OCI-LY7 (cell line): ENCODE measurements at regions of chr11 and their contacts with region 1.

Region 1: DNA sequence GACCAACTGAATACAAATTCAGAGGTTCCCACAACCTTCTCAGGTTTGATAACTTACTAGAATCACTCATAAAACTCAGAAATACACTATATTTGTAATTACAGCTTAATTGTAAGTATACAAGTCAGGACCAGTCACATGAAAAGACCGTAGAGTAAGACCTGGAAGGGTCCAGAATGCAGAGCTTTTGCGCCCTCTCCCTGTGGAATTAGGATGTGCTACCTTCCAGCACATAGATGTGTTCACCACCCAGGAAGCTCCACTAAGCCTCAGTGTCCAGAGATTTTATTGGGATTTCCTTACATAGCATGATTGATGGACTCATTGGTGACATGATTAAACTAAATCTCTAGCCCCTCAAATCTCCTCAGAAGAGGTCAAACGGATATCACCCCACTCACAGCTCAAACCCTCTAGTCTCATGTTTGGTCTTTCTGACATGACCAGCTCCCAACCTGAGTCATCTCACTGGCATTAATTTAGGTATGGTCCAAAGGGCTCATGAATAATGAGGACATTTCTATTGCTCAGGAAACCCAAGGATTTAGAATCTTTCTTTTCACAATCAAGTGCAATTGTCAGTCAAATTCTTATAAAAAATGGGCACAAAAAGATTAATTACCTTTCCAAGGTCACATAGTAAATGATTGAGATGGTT is 77.2 kb upstream of the UBASH3B start:
- DNase-seq: peak; percentile 6
- H3K4me3 ChIP-seq: no peak overlapping the region
- H3K27ac ChIP-seq: no peak overlapping the region
- H3K4me1 ChIP-seq: peaks cover 3% of the 10 kb centered on the region
- CTCF ChIP-seq: peak; percentile 54

Region 2: GRCh38 chr11:122628810-122629555 is 50.7 kb after region 1 on chr11:
- CTCF ChIA-PET with region 1: no interaction called
- POLR2A ChIA-PET with region 1: no interaction called
- intact Hi-C with region 1: loop called (anchors 1 kb)
- DNase-seq: peak; percentile 85
- H3K4me3 ChIP-seq: no peak overlapping the region
- H3K27ac ChIP-seq: no peak overlapping the region
- H3K4me1 ChIP-seq: peaks cover 10% of the 10 kb centered on the region
- CTCF ChIP-seq: peak; percentile 94